BJ (cell line): ENCODE measurements at regions of chr6 and their contacts with region 1.

Region 1: GRCh38 chr6:41318654-41319565 is 16.5 kb upstream of the NCR2 start:
- DNase-seq: peak; percentile 1
- H3K4me3 ChIP-seq: peak overlapping the region; percentile 29
- H3K27me3 ChIP-seq: peaks cover 4% of the 10 kb centered on the region
- CTCF ChIP-seq: peak; percentile 100

Region 2: DNA sequence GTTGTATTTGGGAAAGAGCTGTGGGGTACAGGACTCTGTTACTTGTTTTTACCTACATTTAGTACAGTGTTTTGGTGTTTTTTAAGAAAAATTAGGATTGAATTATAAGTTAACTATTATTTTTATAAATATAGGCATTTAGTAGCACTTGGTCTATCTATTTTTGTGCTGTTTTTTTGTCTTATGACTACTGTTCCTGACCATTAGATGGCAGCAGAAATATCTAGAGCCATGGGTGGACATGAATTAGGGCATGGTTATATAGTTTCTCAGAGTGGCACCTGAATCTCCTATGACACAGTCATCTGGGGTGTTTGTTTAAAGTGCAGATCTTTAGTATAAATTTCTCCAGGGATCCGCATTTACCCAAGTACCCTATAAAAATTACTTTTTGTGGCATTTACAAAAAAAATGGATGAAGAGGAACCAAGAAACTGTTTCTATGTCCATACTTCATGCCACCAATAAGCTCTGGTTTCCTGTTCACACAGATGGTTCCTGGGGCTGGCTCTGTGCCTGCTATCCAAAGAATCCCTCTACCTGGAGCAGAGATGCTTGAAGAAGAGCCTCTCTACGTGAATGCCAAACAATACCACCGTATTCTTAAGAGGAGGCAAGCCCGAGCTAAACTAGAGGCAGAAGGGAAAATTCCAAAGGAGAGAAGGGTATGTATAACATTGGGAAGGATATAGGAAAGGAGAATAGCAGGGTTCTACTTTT is 226.3 kb before region 1 on chr6:
- CTCF ChIA-PET with region 1: interaction called, 19 read pairs
- POLR2A ChIA-PET with region 1: no interaction called
- DNase-seq: no peak
- H3K4me3 ChIP-seq: no peak overlapping the region
- H3K27me3 ChIP-seq: no peaks in the 10 kb centered on the region
- CTCF ChIP-seq: peak; percentile 56

Region 3: GRCh38 chr6:41191569-41191968 is 127.3 kb before region 1 on chr6:
- CTCF ChIA-PET with region 1: interaction called, 15 read pairs
- POLR2A ChIA-PET with region 1: no interaction called
- DNase-seq: no peak
- H3K4me3 ChIP-seq: no peak overlapping the region
- H3K27me3 ChIP-seq: no peaks in the 10 kb centered on the region; the same call in 1 of the 2 replicates
- CTCF ChIP-seq: peak; percentile 56

Region 4: GRCh38 chr6:41298785-41299502 is 20.0 kb before region 1 on chr6:
- CTCF ChIA-PET with region 1: interaction called, 14 read pairs
- POLR2A ChIA-PET with region 1: no interaction called
- DNase-seq: no peak
- H3K4me3 ChIP-seq: no peak overlapping the region
- H3K27me3 ChIP-seq: 0 out of 2 replicates have a peak, but pooled peaks cover 1% of the 10 kb centered on the region
- CTCF ChIP-seq: no peak

Region 5: GRCh38 chr6:41306187-41306854 is 12.6 kb before region 1 on chr6:
- CTCF ChIA-PET with region 1: interaction called, 28 read pairs
- POLR2A ChIA-PET with region 1: no interaction called
- DNase-seq: no peak
- H3K4me3 ChIP-seq: no peak overlapping the region
- H3K27me3 ChIP-seq: peaks cover 7% of the 10 kb centered on the region
- CTCF ChIP-seq: peak; percentile 58